ENCODE measurements at regions of chr16 and their contacts with region 1.

Region 1: DNA sequence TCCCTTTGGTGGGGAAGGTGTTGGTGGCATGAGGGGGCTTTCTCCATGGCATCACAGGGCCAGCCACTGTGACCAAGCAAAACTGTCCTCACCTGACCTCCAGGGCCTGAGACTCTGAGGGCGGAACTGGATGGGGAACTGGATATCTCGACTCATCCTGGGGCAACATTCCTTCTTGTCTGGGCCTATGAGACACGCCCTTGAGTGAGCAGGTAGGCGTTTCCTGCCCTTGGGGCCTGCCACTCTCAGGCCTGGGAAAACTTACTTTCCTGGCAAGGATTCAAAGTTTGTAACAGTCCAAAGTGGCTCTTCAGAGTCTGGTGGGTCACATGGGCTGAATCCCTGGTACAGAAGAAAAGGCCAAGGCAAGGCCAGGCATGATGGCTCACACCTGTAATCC is 9.6 kb downstream of the MT1X start:
- DNase-seq: peak; percentile 49
- H3K4me3 ChIP-seq: no peak overlapping the region
- H3K27ac ChIP-seq: no peak overlapping the region
- H3K4me1 ChIP-seq: peaks cover 9% of the 10 kb centered on the region; the same call in 1 of the 2 replicates
- H3K27me3 ChIP-seq: no peaks in the 10 kb centered on the region

Region 2: DNA sequence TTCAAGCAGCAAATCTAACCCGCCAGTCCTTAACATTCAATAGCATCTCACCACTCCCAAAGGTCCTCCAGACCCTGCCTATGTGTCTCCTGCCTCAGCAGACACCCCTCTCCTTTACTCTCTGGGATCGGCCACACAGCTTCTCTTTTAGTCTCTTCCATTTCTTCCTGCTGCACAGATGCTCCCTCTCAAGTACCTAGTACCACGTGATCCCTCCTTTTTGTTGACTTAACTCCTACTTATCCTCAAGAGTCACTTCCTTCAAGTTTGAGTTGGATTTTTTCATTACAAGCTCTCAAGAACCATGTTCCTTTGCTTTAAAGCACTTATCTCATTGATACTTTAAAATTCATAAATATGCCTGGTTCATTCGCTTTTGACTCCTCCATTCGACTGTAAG is 291.4 kb before region 1 on chr16:
- in situ Hi-C with region 1: no loop called
- DNase-seq: no peak
- H3K4me3 ChIP-seq: no peak overlapping the region
- H3K27ac ChIP-seq: no peak overlapping the region
- H3K4me1 ChIP-seq: no peaks in the 10 kb centered on the region
- H3K27me3 ChIP-seq: no peaks in the 10 kb centered on the region

Region 3: GRCh38 chr16:56436258-56436657 is 255.6 kb before region 1 on chr16:
- in situ Hi-C with region 1: no loop called
- DNase-seq: no peak
- H3K4me3 ChIP-seq: no peak overlapping the region
- H3K27ac ChIP-seq: no peak overlapping the region
- H3K4me1 ChIP-seq: no peaks in the 10 kb centered on the region
- H3K27me3 ChIP-seq: no peaks in the 10 kb centered on the region

Region 4: GRCh38 chr16:56576585-56577293 is 115.1 kb before region 1 on chr16:
- in situ Hi-C with region 1: loop called (anchors 10 kb)
- DNase-seq: peak; percentile 72
- H3K4me3 ChIP-seq: no peak overlapping the region
- H3K27ac ChIP-seq: no peak overlapping the region
- H3K4me1 ChIP-seq: no peaks in the 10 kb centered on the region
- H3K27me3 ChIP-seq: no peaks in the 10 kb centered on the region